Mammary epithelial cell (primary cell): ENCODE measurements at regions of chr4 and their contacts with region 1.

Region 1: GRCh38 chr4:52911684-52912294 is 49.7 kb downstream of the RASL11B start:
- DNase-seq: peak; percentile 73
- H3K4me3 ChIP-seq: no peak overlapping the region
- H3K27ac ChIP-seq: no peak overlapping the region
- H3K4me1 ChIP-seq: peaks cover 3% of the 10 kb centered on the region
- H3K27me3 ChIP-seq: no peaks in the 10 kb centered on the region
- CTCF ChIP-seq: peak; percentile 94 to 95

Region 2: GRCh38 chr4:52925531-52925968 is 13.8 kb after region 1 on chr4:
- CTCF ChIA-PET with region 1: interaction called, 17 read pairs
- dilution Hi-C with region 1: no loop called
- in situ Hi-C with region 1: no loop called
- intact Hi-C with region 1: no loop called
- DNase-seq: no peak
- H3K4me3 ChIP-seq: no peak overlapping the region
- H3K27ac ChIP-seq: no peak overlapping the region
- H3K4me1 ChIP-seq: no peaks in the 10 kb centered on the region
- H3K27me3 ChIP-seq: no peaks in the 10 kb centered on the region
- CTCF ChIP-seq: no peak